Activated naive CD8-positive, alpha-beta T cell treated with anti-CD3 and anti-CD28 coated beads, Interleukin-2, amount 10 ng/mL, durations not matched to agents 7 days and 5 days (primary cell): ENCODE measurements at regions of chr3 and their contacts with region 1.

Region 1: DNA sequence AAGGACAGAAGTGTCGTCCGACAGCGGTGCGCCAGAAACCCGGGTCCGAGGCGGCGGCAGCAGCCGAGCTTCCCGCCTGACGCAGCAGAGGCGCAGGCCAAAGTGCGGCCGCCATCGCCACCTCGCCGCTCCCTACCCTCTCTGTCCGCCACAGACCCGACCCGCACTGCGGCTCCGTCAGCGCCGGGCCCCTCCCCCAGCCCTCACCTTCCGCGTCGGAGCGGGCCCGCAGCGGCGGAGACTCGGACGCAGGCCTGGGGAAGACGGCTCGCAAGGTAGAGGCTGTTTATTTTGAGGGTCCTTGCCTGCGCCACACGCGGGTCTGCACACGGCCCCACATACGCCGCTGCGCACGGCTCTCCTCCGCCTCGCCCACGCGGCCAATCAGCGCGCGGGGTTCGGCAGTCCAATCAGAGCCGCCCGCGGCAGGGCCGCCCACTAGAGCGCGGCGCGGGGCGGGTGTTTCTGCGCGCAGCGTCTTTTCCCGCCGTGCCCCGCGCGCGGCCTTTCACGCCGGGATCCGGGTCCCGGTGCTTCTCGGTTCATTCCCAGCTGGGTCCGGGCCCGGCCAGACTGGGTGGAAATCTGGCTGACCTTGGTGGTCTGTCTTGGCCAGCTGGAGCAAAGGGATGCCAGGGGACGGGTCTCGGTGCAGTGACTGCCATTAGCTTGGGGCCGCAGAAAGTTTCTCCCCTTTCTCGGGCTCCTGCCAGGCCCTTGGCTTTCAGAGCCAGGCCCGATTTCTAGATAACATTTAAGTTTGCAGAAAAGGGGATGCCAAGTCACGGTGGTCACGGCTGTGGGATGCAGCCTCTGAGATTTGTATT is at the start of gene CNBP:
- DNase-seq: peak; percentile 97
- ATAC-seq: peak; percentile 98
- H3K4me3 Mint-ChIP-seq: peak within 1 kb of the TSS; percentile 92
- H3K27ac Mint-ChIP-seq: peak within 1 kb of the TSS; percentile 98
- H3K4me1 Mint-ChIP-seq: peaks cover 38% of the 10 kb centered on the region
- H3K27me3 Mint-ChIP-seq: no peaks in the 10 kb centered on the region
- total RNA-seq, gene CNBP: 309 to 312 TPM

Region 2: DNA sequence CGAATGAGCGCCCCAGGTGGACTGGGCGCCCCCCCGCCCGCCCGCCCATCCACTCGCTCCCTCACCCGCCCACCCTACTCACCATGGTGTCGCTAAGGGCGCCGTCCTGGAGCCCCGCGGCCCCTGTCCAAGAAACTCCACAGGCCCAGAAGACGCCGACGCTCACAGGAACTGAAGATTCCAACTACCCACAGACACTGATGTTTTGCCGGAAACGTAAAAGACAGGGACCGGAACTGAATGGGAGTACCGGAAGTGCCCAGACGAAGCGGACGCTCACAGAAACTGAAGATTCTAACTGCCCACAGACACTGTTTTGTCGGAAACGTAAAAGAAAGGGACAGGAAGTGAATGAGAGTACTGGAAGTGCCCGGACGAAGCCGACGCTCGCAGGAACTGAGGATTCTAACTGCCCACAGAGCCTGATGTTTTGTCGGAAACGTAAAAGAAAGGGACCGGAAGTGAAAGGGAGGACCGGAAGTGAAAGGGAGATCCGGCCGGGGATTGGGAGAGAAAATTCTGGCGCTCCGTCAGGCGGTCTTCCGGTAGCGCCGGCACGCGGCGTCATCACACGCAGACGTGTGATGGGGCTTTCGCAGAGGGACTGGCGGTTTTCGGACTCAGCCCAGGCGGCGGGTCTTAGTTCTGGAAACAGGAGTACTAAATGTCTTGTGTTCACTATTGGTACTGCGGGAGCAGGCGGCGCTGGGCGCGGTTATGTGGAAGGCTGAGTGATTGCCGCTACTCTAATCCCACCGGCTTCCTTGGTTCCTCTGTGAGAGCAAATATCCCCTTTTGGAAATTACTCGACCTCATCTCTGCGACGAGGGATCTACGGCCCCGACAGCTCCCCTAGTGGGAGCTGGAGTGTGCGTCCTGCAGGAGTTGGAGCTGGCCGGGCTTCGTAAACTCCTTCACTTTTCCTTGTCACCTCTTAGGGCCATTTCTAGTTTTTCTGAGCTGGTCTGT is 22.6 kb before region 1 on chr3 and contains the start of gene ISY1:
- POLR2A ChIA-PET with region 1: interaction called, 19 read pairs
- DNase-seq: peak; percentile 87
- ATAC-seq: peak; percentile 81
- H3K4me3 Mint-ChIP-seq: peak within 1 kb of the TSS; percentile 93
- H3K27ac Mint-ChIP-seq: peak within 1 kb of the TSS; percentile 95
- H3K4me1 Mint-ChIP-seq: peaks cover 27% of the 10 kb centered on the region
- H3K27me3 Mint-ChIP-seq: no peaks in the 10 kb centered on the region
- total RNA-seq, gene ISY1: 52.1 to 59.0 TPM

Region 3: DNA sequence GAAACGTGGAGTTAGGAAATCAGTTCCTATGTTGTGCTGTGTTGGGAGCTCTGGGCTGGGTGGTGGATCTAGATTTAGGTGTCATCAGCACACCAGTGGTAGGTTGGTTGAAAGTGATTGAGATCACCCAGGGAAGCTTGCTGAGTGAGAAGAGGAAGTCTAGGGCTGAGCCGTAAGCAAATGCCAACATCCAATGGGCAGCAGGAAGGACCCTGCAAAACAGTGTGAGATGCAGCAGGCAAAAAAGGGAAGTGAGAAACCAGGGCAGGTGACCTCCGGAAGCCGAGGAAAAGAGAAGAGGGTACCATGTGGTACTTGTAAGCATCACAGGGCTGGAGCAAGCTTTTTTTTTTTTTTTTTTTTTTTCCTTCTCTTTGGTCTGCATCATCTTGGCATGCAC is 49.8 kb after region 1 on chr3:
- POLR2A ChIA-PET with region 1: interaction called, 86 read pairs
- DNase-seq: no peak
- ATAC-seq: peak; percentile 40
- H3K4me3 Mint-ChIP-seq: peak overlapping the region; percentile 66
- H3K27ac Mint-ChIP-seq: peak overlapping the region; percentile 84
- H3K4me1 Mint-ChIP-seq: peaks cover 48% of the 10 kb centered on the region
- H3K27me3 Mint-ChIP-seq: no peaks in the 10 kb centered on the region

Region 4: GRCh38 chr3:129336093-129336709 is 152.4 kb after region 1 on chr3:
- POLR2A ChIA-PET with region 1: no interaction called
- DNase-seq: no peak
- ATAC-seq: no peak
- H3K4me3 Mint-ChIP-seq: no peak overlapping the region
- H3K27ac Mint-ChIP-seq: no peak overlapping the region
- H3K4me1 Mint-ChIP-seq: no peaks in the 10 kb centered on the region
- H3K27me3 Mint-ChIP-seq: peaks cover 4% of the 10 kb centered on the region